Colonic mucosa (tissue), 4 donors: ENCODE measurements at regions of chr1 and their contacts with region 1.

Region 1: DNA sequence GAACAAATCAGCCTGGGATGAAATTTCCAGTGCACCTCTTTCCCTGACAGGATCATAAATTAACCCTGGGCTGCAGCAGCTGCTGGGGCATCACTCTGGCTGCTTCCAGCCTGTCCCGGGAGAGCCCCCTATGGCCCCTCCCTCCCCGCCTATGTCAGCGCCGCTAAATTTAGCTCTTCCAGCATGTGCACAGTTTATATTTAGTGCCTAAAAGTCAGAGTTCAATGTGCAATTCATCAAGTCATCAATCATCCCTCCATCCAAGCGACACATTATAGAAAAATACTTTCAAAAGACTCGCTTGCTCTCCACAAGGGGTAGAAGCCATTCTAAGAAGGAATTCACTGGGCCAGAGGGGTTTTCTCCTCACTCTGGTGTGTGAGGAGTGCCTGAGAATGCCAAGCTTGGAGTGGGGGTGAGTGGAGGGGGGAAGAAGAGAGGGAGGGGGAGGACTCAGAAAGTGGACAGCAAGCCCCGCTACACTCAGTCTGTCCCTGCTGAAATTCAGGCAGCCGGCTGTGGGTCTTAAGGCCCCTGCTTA is 37.4 kb downstream of the XCL1 start:
- DNase-seq: no peak
- H3K4me3 ChIP-seq: no peak overlapping the region
- H3K27ac ChIP-seq: no peak overlapping the region
- H3K4me1 ChIP-seq: no peaks in the 10 kb centered on the region
- H3K27me3 ChIP-seq: no peaks in the 10 kb centered on the region
- CTCF ChIP-seq: no peak

Region 2: GRCh38 chr1:168520052-168520751 is 93.6 kb before region 1 on chr1:
- intact Hi-C with region 1: no loop called
- DNase-seq: no peak
- H3K4me3 ChIP-seq: no peak overlapping the region
- H3K27ac ChIP-seq: no peak overlapping the region
- H3K4me1 ChIP-seq: no peaks in the 10 kb centered on the region
- H3K27me3 ChIP-seq: no peaks in the 10 kb centered on the region
- CTCF ChIP-seq: no peak

Region 3: GRCh38 chr1:169133801-169134502 is 520.2 kb after region 1 on chr1:
- intact Hi-C with region 1: loop called (anchors 10 kb)
- DNase-seq: no peak
- H3K4me3 ChIP-seq: no peak overlapping the region
- H3K27ac ChIP-seq: no peak overlapping the region
- H3K4me1 ChIP-seq: no peaks in the 10 kb centered on the region
- H3K27me3 ChIP-seq: no peaks in the 10 kb centered on the region
- CTCF ChIP-seq: peak; percentile 30